GM12878 (cell line): ENCODE measurements at regions of chr14 and their contacts with region 1.

Region 1: DNA sequence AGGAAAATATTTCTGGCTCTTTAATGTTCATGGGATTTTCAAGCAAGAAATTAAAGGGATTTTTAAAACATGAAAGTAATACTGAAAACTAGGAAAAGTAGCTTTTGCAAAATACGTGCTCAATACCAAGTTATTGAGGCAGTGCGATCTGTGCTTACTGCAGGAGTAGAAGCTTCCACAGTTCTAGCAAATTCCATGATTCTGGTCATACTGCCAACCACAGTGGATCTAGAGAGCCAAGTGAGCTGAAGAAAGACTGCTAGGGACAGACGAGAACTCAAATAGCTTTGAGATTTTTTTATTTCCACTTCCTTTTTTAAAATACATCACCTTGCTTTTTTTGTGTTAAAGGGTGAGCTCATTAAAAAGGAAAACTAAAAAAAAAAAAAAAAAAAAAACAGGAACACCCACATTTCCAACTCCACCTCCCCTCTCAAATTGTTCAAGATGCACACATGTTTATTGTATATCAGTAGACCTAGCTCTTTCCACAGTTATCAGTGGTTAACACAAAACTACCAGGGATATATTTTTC is 26.2 kb downstream of the EGLN3 start:
- DNase-seq: no peak
- ATAC-seq: no peak
- H3K4me3 ChIP-seq: no peak overlapping the region
- H3K27ac ChIP-seq: no peak overlapping the region
- H3K4me1 ChIP-seq: no peaks in the 10 kb centered on the region
- H3K27me3 ChIP-seq: no peaks in the 10 kb centered on the region
- CTCF ChIP-seq: no peak
- EP300 ChIP-seq: no peak
- POLR2A ChIP-seq: no peak
- RAD21 ChIP-seq: no peak

Region 2: DNA sequence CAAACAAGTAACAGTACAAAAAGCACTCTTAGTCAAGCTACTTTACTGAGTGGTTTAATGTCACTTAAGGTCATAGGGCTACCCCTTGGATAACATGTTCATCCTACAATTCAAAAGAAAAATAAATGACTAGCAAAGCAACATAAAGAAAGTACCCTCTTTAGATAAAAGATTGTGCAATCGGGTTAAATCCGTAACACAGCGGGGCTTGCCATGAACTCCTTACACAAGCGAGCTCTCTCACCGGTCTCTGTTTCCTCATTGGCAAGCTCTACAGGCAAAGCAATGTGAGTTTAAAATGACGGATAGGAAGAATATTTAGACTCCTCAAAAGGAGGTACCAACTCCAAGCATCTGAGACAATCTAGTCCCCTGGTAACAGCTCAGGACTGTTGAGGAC is 114.3 kb before region 1 on chr14:
- CTCF ChIA-PET with region 1: no interaction called
- POLR2A ChIA-PET with region 1: no interaction called
- RAD21 ChIA-PET with region 1: no interaction called
- SMC1A ChIA-PET with region 1: no interaction called
- in situ Hi-C with region 1: no loop called
- intact Hi-C with region 1: no loop called
- DNase-seq: no peak
- ATAC-seq: no peak
- H3K4me3 ChIP-seq: no peak overlapping the region
- H3K27ac ChIP-seq: no peak overlapping the region
- H3K4me1 ChIP-seq: no peaks in the 10 kb centered on the region
- H3K27me3 ChIP-seq: peaks cover 0 to 3% of the 10 kb centered on the region in 2 experiments; a peak in 1 of 4 replicates
- CTCF ChIP-seq: no peak
- EP300 ChIP-seq: no peak
- POLR2A ChIP-seq: no peak
- RAD21 ChIP-seq: no peak

Region 3: GRCh38 chr14:33908540-33909223 is 16.0 kb before region 1 on chr14:
- CTCF ChIA-PET with region 1: interaction called, 6 read pairs
- POLR2A ChIA-PET with region 1: interaction called, 4 read pairs
- RAD21 ChIA-PET with region 1: interaction called, 4 read pairs
- SMC1A ChIA-PET with region 1: interaction called, 12 read pairs
- in situ Hi-C with region 1: no loop called
- intact Hi-C with region 1: no loop called
- DNase-seq: no peak
- ATAC-seq: no peak
- H3K4me3 ChIP-seq: no peak overlapping the region
- H3K27ac ChIP-seq: no peak overlapping the region
- H3K4me1 ChIP-seq: no peaks in the 10 kb centered on the region
- H3K27me3 ChIP-seq: no peaks in the 10 kb centered on the region
- CTCF ChIP-seq: no peak
- EP300 ChIP-seq: no peak
- POLR2A ChIP-seq: no peak
- RAD21 ChIP-seq: no peak